ENCODE measurements at regions of chr12 and their contacts with region 1.

Region 1: DNA sequence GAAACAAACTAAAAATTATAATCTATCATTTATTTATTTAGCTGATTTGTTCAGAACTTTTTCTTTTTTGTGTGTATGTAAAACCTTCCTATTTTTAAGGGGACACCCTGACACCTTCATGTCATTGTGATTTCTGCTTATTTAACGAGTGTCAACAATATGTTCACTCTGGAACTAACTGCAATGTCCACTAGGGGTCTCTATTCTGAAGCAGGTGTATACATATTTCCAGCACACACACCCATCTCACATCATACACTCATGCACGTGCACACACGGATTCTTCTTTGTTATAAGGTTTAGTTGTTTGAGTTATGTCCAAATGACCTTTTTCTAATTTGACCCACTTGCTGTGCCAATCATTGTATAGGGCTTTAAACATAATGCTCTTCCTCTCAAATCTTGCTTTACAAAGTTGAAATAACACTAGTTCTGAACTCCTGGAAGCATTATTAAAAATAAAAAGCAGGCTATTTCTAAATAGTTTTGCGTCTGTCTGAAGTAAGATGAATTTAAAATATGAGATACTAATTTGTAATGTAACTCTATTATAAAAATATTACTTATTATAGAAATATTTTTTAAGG is 15.5 kb downstream of the E2F7 start:
- DNase-seq: peak; percentile 57 to 69 (median 64)
- ATAC-seq: peak; percentile 99
- H3K4me3 ChIP-seq: no peak overlapping the region
- H3K27ac ChIP-seq: no peak overlapping the region
- H3K4me1 ChIP-seq: no peaks in the 10 kb centered on the region
- H3K27me3 ChIP-seq: no peaks in the 10 kb centered on the region
- CTCF ChIP-seq: peak; percentile 47 to 72 (median 70)
- EP300 ChIP-seq: no peak
- POLR2A ChIP-seq: no peak
- RAD21 ChIP-seq: peak; percentile 62 to 70

Region 2: GRCh38 chr12:77324763-77325468 is 275.1 kb after region 1 on chr12:
- CTCF ChIA-PET with region 1: no interaction called
- POLR2A ChIA-PET with region 1: no interaction called
- in situ Hi-C with region 1: no loop called
- intact Hi-C with region 1: loop called (anchors 10 kb)
- DNase-seq: peak; percentile 21 to 61 (median 38)
- ATAC-seq: peak; percentile 100
- H3K4me3 ChIP-seq: 0 out of 2 replicates have a peak overlapping the region, but pooled peaks have one; percentile 15
- H3K27ac ChIP-seq: no peak overlapping the region
- H3K4me1 ChIP-seq: peaks cover 0 to 7% of the 10 kb centered on the region in 2 experiments; a peak in 2 of 5 replicates
- H3K27me3 ChIP-seq: peaks cover 0 to 4% of the 10 kb centered on the region in 2 experiments; a peak in 2 of 5 replicates
- CTCF ChIP-seq: peak; percentile 35 to 46 (median 42); a peak in 4 of 6 replicates
- EP300 ChIP-seq: no peak
- POLR2A ChIP-seq: no peak
- RAD21 ChIP-seq: peak in 1 of 2 experiments; percentile 36; a peak in 3 of 4 replicates

Region 3: DNA sequence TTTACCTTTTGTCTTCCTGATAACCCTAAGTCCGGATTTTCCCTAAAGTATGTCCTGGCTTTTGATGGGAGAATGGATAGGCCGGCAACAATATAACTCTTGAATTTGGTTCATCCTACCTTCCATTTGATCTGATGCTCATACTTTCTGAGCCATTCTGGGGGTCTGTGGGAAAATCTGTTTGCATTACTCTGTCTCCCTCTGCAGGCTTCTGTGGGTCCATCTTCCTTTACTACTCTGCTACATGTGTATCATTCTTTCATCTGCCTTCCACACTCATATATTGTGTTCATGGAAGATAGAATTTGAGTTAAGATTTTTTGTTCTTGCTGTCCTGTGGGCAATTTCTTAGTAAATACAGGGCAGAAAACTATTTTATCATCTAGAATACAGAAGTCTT is 882.4 kb after region 1 on chr12:
- CTCF ChIA-PET with region 1: no interaction called
- POLR2A ChIA-PET with region 1: no interaction called
- in situ Hi-C with region 1: no loop called
- intact Hi-C with region 1: no loop called
- DNase-seq: no peak
- ATAC-seq: no peak
- H3K4me3 ChIP-seq: no peak overlapping the region
- H3K27ac ChIP-seq: no peak overlapping the region
- H3K4me1 ChIP-seq: no peaks in the 10 kb centered on the region
- H3K27me3 ChIP-seq: no peaks in the 10 kb centered on the region
- CTCF ChIP-seq: no peak
- EP300 ChIP-seq: no peak
- POLR2A ChIP-seq: no peak
- RAD21 ChIP-seq: no peak